BJ (cell line): ENCODE measurements at regions of chr7 and their contacts with region 1.

Region 1: DNA sequence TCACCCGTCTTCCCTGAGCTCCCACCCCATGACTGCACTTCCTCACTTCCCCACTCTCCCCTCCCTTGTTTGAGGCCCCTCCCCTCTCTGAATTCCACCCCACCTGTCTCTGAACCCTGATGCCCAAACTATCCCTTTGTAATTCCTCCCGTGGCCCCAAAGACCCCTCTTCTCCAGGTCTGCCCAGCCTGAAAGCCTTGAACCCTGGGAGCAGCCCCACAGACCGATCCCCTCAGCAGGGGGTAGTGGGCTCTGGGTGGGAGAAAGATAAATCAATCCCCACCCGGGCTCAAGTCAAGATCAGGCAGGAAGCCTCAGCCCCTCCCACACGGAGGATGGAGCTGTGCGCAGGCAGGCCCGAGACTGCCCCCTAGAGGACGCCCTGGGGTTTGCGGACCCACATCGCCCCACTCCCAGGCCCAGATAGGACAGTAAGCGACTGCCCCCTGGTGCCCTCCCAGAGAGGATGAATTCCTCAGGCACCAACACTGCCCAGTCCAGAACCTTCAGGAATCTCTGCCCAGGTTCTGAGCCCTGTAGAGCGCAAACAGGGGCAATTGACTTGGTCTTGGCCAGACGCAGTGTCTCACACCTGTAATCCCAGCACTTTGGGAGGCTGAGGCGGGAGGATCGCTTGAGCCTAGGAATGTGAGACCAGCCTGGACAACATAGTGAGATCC is 11.7 kb downstream of the HSPB1 start:
- DNase-seq: no peak
- H3K4me3 ChIP-seq: no peak overlapping the region
- H3K27me3 ChIP-seq: no peaks in the 10 kb centered on the region
- CTCF ChIP-seq: peak; percentile 100

Region 2: GRCh38 chr7:75977743-75978142 is 336.4 kb before region 1 on chr7:
- CTCF ChIA-PET with region 1: no interaction called
- POLR2A ChIA-PET with region 1: no interaction called
- DNase-seq: no peak
- H3K4me3 ChIP-seq: no peak overlapping the region
- H3K27me3 ChIP-seq: no peaks in the 10 kb centered on the region
- CTCF ChIP-seq: no peak

Region 3: GRCh38 chr7:76262683-76263402 is 51.3 kb before region 1 on chr7:
- CTCF ChIA-PET with region 1: interaction called, 30 read pairs
- POLR2A ChIA-PET with region 1: interaction called, 15 read pairs
- DNase-seq: no peak
- H3K4me3 ChIP-seq: no peak overlapping the region
- H3K27me3 ChIP-seq: peaks cover 8% of the 10 kb centered on the region
- CTCF ChIP-seq: peak; percentile 86

Region 4: DNA sequence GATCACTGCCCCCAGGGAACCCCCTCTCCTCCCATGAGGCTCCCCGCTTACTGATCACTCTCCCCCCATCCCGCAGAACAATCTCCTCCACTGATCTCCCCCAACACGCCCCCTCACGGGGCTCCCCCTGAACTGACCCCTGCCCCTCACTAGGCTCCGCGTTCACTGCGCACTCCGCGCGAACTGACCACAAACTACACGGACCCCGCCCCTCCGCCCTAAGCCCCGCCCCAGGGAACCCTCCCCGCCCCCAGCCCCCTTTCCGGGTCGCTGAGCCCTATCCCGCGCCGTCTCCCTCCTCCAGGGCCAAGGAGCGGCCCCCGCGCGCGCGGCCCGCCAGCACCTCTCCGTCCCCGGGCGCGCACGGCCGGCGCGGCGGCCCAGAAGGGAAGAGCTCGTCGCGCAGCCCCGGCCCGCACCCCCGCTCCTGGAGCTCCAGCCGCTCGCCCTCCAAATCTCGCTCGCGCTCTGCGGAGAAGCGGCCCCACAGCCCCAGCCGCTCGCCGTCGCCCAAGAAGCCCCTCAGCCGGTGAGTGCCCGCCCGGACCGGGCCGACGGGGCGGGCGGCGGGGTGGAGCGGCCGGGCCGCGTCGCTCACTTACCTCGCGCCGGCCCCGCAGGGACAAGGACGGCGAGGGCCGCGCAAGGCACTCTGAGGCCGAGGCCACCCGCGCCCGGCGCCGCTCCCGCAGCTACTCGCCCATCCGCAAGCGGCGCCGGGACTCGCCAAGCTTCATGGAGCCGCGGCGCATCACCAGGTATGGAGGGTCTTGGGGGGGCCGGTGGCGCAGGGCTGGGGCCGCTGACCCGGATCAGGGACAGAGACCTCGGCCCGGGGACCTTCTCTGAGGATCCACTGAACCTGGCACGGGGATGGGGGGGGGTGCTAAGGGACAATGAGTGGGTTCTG is 31.6 kb before region 1 on chr7:
- CTCF ChIA-PET with region 1: interaction called, 18 read pairs
- POLR2A ChIA-PET with region 1: no interaction called
- DNase-seq: no peak
- H3K4me3 ChIP-seq: peak overlapping the region; percentile 36
- H3K27me3 ChIP-seq: peaks cover 26% of the 10 kb centered on the region
- CTCF ChIP-seq: no peak

Region 5: DNA sequence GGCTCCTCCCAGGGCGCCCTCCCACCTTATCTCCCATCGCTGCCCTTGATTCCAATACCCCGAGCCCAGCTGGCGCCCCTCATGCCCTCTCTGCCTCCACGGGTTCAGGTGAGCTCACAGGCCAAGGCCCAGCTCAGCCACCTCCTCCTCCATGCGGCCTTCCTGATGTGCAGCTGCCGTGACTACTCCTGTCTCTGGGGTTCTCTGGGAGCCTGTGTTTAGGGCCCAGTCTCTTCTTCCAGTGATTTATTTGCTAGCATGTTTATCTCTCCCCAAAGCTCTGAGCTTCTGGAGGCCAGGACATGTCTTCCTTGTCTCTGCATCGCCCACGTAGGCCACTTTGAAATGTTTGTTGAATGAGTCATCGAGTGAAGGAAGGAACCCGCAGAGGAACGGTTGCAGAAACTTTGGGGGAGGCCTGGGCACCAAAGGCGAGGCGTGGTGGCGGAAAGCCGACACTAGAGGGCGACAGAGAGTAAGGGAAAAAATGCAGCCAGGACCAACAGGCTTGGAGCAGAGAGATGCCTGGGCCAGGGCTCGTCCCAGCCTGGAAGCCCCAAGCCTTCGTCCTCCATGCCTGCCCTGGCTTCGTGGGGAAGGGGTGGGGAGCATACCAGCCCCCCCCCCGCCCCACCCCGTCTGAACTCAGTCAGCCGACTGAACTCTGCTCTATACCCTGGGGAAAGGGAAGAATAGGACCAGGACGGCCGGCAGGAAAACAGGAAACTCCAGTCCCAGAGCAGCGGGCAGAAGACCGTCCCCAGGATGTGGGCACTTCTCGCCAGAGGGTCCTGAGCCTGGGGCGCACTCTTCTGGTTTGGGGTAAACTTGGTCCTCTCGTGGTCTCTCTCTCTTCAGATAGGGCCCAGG is 22.6 kb before region 1 on chr7:
- CTCF ChIA-PET with region 1: interaction called, 136 read pairs
- POLR2A ChIA-PET with region 1: interaction called, 3 read pairs
- DNase-seq: peak; percentile 92
- H3K4me3 ChIP-seq: peak overlapping the region; percentile 14
- H3K27me3 ChIP-seq: no peaks in the 10 kb centered on the region
- CTCF ChIP-seq: peak; percentile 97

Region 6: GRCh38 chr7:76297387-76297756 is 16.8 kb before region 1 on chr7:
- CTCF ChIA-PET with region 1: interaction called, 136 read pairs
- POLR2A ChIA-PET with region 1: interaction called, 3 read pairs
- DNase-seq: peak; percentile 74
- H3K4me3 ChIP-seq: no peak overlapping the region
- H3K27me3 ChIP-seq: no peaks in the 10 kb centered on the region
- CTCF ChIP-seq: no peak

Region 7: DNA sequence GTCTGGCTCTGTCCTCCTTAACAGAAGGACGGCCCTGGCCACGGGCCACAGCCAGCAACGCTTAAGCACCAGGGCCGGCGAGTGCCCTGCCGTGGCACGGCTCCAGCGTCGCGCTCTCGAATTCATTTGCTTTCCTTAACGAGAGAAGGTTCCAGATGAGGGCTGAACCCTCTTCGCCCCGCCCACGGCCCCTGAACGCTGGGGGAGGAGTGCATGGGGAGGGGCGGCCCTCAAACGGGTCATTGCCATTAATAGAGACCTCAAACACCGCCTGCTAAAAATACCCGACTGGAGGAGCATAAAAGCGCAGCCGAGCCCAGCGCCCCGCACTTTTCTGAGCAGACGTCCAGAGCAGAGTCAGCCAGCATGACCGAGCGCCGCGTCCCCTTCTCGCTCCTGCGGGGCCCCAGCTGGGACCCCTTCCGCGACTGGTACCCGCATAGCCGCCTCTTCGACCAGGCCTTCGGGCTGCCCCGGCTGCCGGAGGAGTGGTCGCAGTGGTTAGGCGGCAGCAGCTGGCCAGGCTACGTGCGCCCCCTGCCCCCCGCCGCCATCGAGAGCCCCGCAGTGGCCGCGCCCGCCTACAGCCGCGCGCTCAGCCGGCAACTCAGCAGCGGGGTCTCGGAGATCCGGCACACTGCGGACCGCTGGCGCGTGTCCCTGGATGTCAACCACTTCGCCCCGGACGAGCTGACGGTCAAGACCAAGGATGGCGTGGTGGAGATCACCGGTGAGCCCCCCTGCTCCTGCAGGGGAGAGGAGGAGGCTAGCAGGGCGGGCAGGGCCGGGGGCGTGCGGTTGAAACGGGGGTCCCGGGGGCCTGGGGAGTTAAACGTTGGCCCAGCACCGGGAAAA is 11.6 kb before region 1 on chr7 and contains the start of gene HSPB1:
- CTCF ChIA-PET with region 1: interaction called, 30 read pairs
- POLR2A ChIA-PET with region 1: no interaction called
- DNase-seq: peak; percentile 68
- H3K4me3 ChIP-seq: peak within 1 kb of the TSS; percentile 98
- H3K27me3 ChIP-seq: no peaks in the 10 kb centered on the region
- CTCF ChIP-seq: no peak
- polyA plus RNA-seq, gene HSPB1: 642 and 966 TPM in 2 replicates

Region 8: DNA sequence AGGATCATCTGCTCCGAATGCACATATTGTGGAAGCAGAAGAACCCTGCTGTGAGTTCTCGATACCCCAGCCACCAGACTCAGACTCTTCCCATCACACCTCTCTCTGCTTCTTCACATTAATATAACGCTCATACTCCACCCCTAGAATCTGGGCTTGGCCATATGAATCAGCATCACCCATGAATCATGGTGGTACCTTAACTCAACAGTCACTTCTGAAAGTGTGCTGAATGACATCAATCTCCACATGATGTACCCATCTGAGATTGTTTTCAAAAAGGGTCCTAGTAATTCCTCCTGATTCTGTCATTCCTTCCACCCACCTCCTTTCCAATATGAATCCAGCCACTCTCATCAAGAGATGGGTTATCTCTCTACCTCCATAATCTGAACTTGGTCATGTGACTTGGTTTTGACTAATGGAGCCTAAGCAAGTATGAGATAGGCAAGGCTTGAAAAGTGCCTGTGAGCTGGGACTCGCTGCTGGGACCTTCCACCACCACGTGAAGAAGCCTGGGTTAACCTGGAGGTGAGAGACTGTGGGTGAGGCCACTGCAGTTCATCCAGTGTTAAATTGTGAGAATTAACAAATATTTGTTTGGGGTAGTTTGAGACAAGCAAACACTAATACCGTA is 29.2 kb after region 1 on chr7:
- CTCF ChIA-PET with region 1: no interaction called
- POLR2A ChIA-PET with region 1: no interaction called
- DNase-seq: no peak
- H3K4me3 ChIP-seq: no peak overlapping the region
- H3K27me3 ChIP-seq: no peaks in the 10 kb centered on the region
- CTCF ChIP-seq: no peak

Region 9: DNA sequence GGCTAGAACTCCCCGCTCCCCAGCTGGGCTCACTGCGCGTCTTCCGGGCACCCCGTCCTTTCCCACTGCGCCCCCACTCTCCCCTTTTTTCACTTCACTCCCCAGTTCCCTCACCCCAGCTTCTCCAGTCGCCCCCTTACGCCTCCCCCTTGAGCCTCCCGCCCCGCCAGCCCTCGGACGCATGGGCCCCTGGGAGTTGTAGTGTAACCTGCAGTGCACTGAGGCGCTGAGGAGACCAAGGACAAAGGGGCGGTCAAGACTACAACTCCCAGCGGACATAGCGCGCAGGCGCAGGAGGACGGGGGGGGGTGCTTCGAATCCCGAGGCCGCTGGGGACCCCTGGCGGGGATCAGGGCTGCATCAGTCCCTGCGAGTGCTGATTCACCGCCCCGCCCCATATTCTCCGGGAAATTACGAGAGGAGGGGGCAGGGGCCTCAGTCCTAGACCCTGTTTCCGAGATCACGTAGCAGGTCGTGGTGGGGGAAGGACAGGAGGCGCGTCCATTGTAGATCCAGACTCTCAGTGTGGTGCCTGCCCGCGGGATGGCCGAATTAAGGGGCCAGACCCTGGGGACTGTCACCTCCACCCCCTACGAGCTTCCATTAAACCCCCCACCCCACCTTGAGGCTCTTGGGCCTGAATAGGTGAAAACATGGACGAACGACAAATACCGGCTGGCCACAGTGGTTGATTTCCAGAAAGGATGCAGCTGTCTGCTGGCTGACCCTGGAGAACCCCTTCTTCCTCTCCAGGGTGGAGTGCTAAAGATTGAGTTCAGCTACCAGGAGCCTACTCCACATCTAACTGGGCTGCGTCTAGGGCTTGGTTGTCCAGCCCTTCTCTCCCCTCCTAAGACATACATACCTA is 45.2 kb after region 1 on chr7:
- CTCF ChIA-PET with region 1: interaction called, 13 read pairs
- POLR2A ChIA-PET with region 1: interaction called, 3 read pairs
- DNase-seq: peak; percentile 91
- H3K4me3 ChIP-seq: peak overlapping the region; percentile 99
- H3K27me3 ChIP-seq: no peaks in the 10 kb centered on the region
- CTCF ChIP-seq: peak; percentile 90